Heart left ventricle (tissue), 16 donors: ENCODE measurements at regions of chr4 and their contacts with region 1.

Region 1: DNA sequence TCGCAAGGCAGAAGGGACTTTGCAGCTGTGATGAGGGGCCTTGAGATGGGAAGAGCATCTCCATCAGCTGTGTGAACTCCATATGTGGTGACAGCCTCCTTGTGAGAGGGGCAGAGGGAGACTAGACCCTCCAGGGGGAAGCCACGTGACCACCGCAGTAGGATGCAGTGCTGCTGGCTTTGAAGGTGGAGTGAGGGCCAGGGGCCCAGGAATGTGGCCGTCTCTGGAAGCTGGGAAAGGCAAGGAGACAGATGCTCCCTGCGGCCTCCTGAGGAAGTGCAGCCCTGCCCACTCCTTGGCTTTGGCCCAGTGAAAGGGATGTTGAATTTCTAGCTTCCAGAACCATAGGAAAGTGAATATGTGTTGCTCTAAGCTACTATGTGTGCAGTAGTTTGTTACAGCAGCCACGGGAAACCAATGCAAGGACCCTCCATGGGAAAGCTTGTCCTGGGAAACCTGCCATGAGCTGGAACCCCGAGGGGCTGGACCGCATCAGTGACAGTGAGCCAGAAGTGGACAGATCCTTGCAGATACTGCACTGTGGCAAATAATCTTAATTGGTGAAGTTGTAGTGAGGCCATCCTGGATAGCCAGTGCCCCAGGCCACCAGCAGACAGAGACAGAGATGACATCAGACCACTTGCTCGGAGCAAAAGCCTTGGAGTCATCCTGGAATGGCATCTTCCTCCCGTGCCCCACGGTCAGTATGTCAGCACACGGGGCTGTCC is 35.4 kb upstream of the SORCS2 start:
- DNase-seq: peak; percentile 42 to 64 (median 51)
- ATAC-seq: peak in 3 of 4 donors; percentile 53 to 73 (median 64)
- H3K4me3 ChIP-seq: no peak overlapping the region
- H3K27ac ChIP-seq: peak overlapping the region in 8 of 12 donors; percentile 52 to 91 (median 70)
- H3K4me1 ChIP-seq: peaks cover 0 to 29% (median 18%) of the 10 kb centered on the region in 12 donors
- H3K27me3 ChIP-seq: no peaks in the 10 kb centered on the region
- CTCF ChIP-seq: peak; percentile 32 to 75 (median 58)
- POLR2A ChIP-seq: no peak

Region 2: DNA sequence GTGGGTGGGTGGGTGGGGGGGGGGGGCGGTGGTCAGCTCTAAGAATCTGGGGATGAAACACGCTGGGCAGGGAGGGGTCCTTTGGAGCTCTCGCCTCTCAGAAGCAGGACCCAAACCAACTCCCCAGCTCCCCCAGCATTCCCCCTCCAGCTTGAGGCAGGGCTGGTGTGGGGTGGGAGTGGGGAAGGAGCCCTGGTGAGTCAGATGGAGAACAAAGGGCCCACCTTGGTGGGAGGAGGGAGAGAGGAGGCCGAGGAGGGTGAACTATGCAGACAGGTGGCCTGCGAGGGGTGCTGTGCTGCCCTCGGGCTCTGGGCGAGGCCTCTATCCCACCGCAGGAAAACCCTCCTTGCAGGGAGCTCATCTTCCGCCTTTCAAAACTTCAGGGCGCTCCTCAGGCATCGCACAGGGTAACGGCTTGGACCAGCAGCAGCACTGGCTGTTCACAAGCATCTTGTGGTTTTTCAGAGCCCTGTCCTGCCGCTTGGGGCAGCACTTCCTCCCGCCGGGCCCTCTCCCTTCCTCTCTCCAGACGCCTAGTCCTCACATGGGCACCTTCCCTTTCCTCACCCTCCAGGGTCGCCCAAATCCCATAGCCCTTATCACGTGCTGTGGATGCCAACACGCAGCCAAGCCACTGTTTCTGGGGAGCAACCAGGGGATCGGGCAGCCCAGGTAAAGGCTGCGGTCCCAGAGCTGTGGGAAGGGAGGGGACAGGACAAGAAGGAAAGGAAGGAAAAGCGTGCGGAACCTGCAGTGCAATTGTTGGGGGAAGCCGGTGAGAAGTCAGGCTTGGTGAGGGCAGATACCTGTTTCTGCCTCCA is 55.0 kb before region 1 on chr4:
- intact Hi-C with region 1: loop called in 3 of 10 experiments (anchors 2 to 5 kb)
- DNase-seq: peak; percentile 68 to 89 (median 75)
- ATAC-seq: peak; percentile 70 to 79 (median 76)
- H3K4me3 ChIP-seq: peak overlapping the region in 11 of 12 donors; percentile 54 to 75 (median 66)
- H3K27ac ChIP-seq: peak overlapping the region in 6 of 12 donors; percentile 72 to 90 (median 88)
- H3K4me1 ChIP-seq: peaks cover 0 to 28% (median 16%) of the 10 kb centered on the region in 12 donors
- H3K27me3 ChIP-seq: no peaks in the 10 kb centered on the region
- CTCF ChIP-seq: peak; percentile 56 to 88 (median 73)
- POLR2A ChIP-seq: no peak

Region 3: GRCh38 chr4:7291372-7292114 is 134.6 kb after region 1 on chr4:
- intact Hi-C with region 1: no loop called
- DNase-seq: peak; percentile 72 to 84 (median 80)
- ATAC-seq: peak; percentile 53 to 86 (median 70)
- H3K4me3 ChIP-seq: no peak overlapping the region
- H3K27ac ChIP-seq: peak overlapping the region in 9 of 12 donors; percentile 12 to 61 (median 55)
- H3K4me1 ChIP-seq: peaks cover 0 to 25% (median 8%) of the 10 kb centered on the region in 12 donors
- H3K27me3 ChIP-seq: no peaks in the 10 kb centered on the region
- CTCF ChIP-seq: no peak
- POLR2A ChIP-seq: no peak